ENCODE measurements at regions of chr14 and their contacts with region 1.

Region 1: GRCh38 chr14:77760381-77761246 is at the start of gene SNW1:
- DNase-seq: peak; percentile 93
- H3K4me3 Mint-ChIP-seq: peak within 1 kb of the TSS; percentile 89
- H3K27ac Mint-ChIP-seq: peak within 1 kb of the TSS; percentile 96
- H3K4me1 Mint-ChIP-seq: peaks cover 14% of the 10 kb centered on the region
- H3K27me3 Mint-ChIP-seq: no peaks in the 10 kb centered on the region
- CTCF ChIP-seq: no peak
- total RNA-seq, gene SNW1: 113 and 122 TPM in 2 replicates

Region 2: DNA sequence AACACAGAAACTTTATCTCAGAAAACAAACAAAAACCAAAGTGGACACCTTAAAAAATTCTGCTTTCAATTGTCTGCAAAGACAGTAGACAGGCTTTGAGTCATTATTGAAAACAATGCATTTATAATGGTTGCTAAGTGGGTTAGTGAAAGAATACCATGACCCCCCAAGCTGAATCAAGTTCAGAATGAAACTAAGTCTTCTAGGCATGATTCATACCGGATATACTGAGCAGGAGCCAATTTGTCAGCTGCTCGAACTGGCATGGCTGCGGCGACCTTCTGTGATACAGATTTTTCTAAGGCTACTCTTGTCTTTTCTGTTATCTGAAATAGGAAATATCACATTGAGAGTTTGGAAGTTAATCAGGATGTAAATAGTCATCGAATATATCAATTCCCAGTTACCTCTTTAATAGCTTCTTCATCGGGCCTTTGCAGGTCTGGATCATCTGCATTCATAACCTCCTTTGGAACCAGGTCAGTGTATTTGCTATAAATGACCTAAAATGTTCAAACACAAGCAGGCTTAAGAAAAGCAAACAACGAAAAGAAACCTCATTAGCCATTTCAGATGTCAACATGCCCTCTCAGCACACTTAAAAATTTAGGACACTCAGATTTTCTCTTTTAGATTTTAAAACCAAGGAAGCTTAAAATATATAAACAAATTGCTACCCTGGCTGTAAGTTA is 21.9 kb before region 1 on chr14:
- CTCF ChIA-PET with region 1: no interaction called
- POLR2A ChIA-PET with region 1: interaction called, 14 read pairs
- intact Hi-C with region 1: no loop called
- DNase-seq: peak; percentile 6
- H3K4me3 Mint-ChIP-seq: no peak overlapping the region
- H3K27ac Mint-ChIP-seq: peak overlapping the region; percentile 40
- H3K4me1 Mint-ChIP-seq: no peaks in the 10 kb centered on the region
- H3K27me3 Mint-ChIP-seq: no peaks in the 10 kb centered on the region
- CTCF ChIP-seq: no peak

Region 3: GRCh38 chr14:77799863-77800730 is 39.5 kb after region 1 on chr14 and contains the start of gene ADCK1:
- CTCF ChIA-PET with region 1: interaction called, 15 read pairs
- POLR2A ChIA-PET with region 1: interaction called, 31 read pairs
- intact Hi-C with region 1: loop called (anchors 1 kb)
- DNase-seq: peak; percentile 72
- H3K4me3 Mint-ChIP-seq: peak within 1 kb of the TSS; percentile 87
- H3K27ac Mint-ChIP-seq: peak within 1 kb of the TSS; percentile 61
- H3K4me1 Mint-ChIP-seq: peaks cover 18% of the 10 kb centered on the region
- H3K27me3 Mint-ChIP-seq: no peaks in the 10 kb centered on the region
- CTCF ChIP-seq: peak; percentile 39
- total RNA-seq, gene ADCK1: 7.0 and 7.8 TPM in 2 replicates